Posterior cingulate gyrus (tissue), 11 donors: ENCODE measurements at regions of chr17 and their contacts with region 1.

Region 1: DNA sequence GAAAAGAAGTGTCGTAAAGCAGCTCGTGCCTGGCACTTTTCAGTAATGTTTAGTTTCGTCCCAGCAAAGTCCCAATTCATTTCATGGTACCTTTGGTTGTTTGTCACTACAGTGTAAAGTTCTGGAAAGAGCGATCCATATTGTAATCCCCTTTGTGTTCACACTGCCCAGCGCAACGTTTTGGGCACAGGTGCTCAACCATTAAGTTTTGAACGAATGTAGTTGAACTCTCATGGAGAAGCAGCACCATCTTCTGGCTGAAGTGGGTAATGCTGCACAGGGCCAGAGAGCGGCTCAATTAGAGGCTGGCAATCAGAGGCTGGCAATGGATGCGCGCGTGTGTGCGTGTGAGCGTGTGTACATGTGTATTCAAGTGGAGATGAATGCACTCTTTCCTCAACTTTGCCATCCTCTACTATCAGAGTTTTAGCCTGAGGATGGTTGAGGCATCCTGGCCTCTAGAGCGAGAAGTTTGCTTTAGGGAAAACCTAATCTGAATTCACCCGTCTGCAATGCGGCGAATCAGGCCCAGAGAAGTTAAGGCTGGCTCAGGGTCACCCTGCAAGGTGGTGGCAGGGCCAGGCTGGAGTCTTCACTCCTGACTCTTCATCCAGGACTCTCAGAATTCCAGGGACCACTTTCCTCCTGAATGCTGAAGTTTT is 29.9 kb downstream of the DYNLL2 start:
- DNase-seq: peak; percentile 46 to 95 (median 88)

Region 2: GRCh38 chr17:58006924-58007780 is 105.9 kb before region 1 on chr17 and contains the start of gene SRSF1:
- intact Hi-C with region 1: loop called (anchors 5 kb)
- DNase-seq: peak; percentile 91 to 99 (median 96)

Region 3: DNA sequence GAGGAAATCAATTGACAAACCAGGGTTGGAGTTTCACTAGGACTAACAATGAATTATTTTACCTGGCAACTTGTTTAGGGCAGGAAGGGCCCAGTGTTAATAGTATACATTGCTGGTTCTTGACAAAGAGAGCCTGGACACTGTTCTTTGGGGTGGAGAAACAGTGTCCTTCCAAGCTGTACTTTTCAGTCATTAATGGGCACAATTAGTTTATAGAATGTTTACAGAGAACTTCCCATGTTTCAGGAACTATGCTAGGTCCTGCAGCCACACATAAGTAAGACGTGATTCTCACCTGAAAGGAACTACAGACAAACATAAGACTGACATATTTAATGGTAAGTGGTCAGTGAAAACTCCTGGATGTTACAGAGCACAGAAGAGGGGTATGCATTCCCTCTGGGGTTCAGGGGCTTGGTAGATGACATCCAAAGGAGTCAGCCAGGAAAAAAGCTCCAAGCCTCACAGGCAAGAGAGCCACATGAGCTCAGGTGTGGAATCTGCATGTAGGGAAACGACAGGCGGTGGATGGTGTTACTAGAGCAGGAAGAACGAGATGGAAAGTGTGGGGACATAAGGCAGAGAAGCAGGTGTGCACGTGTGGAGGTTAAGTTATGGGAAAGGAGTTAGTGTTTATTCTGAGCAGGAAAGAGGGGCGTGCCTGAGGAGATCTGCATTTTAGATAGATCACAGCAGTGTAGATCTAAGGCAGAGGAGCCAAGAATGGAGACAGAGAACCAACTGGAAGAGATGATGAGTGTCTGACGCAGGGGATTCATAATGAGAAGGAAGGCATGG is 33.6 kb before region 1 on chr17:
- intact Hi-C with region 1: no loop called
- DNase-seq: no peak

Region 4: GRCh38 chr17:58097384-58098088 is 15.6 kb before region 1 on chr17:
- intact Hi-C with region 1: no loop called
- DNase-seq: no peak